ENCODE measurements at regions of chr1 and their contacts with region 1.

Region 1: DNA sequence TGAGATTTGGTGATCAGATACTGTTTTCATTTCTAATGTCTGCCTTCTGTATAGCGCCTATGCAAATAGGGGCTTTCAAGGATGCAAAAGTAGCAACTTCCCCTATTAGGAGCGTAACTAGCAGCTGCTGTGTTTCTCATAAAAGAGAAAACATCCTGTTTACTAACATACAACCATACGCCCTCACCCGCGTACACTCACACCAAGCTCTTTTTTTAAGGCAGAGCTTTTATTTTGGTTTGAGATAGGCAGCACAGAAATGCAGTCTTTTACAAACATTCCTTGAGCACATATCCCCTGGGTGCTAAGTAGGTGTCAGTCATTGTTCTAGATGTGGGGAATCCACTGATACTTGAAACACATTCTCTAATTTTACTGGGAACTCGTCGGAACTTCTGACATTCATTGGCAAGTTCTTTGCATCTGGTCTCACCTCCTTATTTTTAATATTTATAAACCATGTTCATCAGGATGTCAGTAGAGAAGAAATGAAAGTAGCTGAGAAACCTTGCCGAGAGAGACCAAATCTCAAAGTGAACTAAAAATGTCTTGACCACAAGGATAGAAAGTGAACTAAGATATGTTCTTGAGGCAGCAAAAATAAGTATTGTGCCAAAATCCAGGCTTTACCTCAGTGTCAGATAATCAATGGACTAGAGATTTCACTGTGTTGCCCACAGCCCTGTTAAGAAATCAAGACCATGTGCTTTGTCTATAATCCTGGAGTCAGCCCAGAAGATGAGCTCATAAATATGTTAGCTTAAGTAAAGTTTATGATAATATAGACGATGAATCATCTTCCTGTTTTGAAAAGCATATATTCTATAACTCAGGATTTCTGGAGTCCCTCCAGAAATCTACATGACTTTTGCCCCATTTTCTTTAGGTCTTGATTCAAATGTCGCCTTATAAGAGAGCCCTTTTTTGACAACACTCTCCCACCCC is 350.9 kb downstream of the ST6GALNAC3 start:
- DNase-seq: no peak
- H3K4me3 ChIP-seq: peak overlapping the region; percentile 26 to 55
- H3K27ac ChIP-seq: peak overlapping the region; percentile 55 to 57
- H3K4me1 ChIP-seq: peaks cover 0 to 26% of the 10 kb centered on the region in 2 donors
- H3K27me3 ChIP-seq: no peaks in the 10 kb centered on the region
- CTCF ChIP-seq: no peak

Region 2: GRCh38 chr1:76147917-76148316 is 277.6 kb before region 1 on chr1:
- intact Hi-C with region 1: no loop called
- DNase-seq: no peak
- H3K4me3 ChIP-seq: no peak overlapping the region
- H3K27ac ChIP-seq: no peak overlapping the region
- H3K4me1 ChIP-seq: peaks cover 0 to 14% of the 10 kb centered on the region in 2 donors
- H3K27me3 ChIP-seq: no peaks in the 10 kb centered on the region
- CTCF ChIP-seq: no peak

Region 3: DNA sequence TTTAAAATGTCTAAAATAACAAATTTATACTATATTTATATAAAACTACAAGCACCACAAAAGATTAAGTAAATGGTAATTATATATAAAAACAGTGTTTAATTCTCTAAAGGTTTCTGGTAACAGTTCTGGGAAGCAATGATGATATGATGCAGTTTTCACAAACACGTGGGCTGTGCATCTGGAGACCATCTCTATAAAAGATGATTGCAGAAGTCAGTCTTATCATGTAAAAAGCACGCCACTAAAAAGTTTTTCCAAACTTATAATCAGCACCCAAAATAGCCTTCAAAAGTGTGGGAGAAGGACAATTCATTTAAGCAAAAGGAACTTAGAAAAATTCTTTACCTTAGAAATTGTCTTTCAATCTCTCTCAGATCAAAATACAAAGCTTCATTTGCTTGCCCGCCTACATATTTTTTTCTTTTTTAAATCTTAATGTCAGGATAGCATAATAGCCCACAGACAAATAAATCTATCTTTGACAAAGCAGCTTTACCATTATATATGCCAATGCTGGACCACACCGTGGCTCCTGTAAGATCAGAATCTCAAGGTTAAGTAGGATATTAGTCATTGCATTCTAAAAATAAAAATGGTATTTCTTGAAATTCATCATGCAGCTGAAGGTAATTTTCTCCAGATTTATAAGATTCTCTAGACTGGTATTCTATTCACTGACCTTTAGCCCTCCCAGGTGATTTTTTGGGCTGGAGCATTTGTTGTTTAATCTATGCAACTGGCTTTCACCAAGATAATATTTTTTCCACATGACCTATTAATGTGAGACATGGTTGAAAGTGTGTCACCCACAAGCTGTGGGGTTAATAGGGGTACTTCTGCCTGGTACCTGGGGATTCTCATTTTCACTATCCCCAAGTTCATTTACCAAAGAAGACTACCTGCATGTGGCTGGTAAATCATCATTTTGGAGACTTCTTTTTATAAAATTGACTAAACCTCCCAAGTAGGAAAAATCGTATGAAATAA is 252.2 kb after region 1 on chr1:
- intact Hi-C with region 1: no loop called
- DNase-seq: no peak
- H3K4me3 ChIP-seq: no peak overlapping the region
- H3K27ac ChIP-seq: no peak overlapping the region
- H3K4me1 ChIP-seq: no peaks in the 10 kb centered on the region
- H3K27me3 ChIP-seq: no peaks in the 10 kb centered on the region
- CTCF ChIP-seq: no peak

Region 4: DNA sequence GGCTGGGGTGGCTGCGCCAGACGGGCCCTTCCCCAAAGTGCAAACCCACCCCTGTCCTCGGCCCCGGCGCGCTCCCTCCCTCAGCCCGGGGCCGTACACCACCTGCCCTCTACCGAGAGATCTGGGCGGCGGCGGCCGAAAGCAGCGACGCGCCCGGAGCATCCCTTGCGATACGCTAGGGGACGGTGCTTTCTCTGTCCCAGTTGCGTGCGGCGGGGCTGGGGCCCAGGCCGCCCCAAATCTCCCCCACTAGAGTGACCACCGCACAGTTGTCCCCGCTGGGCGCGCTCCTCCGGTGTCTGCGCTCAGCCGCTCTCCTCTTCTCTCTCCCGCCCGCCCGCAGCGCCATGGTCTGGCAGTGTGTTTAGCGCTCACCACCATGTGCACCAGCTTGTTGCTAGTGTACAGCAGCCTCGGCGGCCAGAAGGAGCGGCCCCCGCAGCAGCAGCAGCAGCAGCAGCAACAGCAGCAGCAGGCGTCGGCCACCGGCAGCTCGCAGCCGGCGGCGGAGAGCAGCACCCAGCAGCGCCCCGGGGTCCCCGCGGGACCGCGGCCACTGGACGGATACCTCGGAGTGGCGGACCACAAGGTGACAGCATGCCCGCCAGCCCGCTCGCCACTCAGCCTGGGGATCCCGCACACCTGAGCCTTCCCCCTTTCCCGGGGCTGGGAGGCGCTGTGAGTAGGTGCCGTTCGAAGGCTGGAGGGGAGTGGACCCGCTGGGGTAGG is 442.8 kb after region 1 on chr1:
- intact Hi-C with region 1: loop called (anchors 10 kb)
- DNase-seq: peak in 1 of 2 donors; percentile 69
- H3K4me3 ChIP-seq: peak overlapping the region; percentile 56 to 76
- H3K27ac ChIP-seq: peak overlapping the region; percentile 69 to 77
- H3K4me1 ChIP-seq: peaks cover 0 to 21% of the 10 kb centered on the region in 2 donors
- H3K27me3 ChIP-seq: no peaks in the 10 kb centered on the region
- CTCF ChIP-seq: peak in 2 of 3 experiments; percentile 10 to 35